ENCODE measurements at regions of chr5 and their contacts with region 1.

Region 1: DNA sequence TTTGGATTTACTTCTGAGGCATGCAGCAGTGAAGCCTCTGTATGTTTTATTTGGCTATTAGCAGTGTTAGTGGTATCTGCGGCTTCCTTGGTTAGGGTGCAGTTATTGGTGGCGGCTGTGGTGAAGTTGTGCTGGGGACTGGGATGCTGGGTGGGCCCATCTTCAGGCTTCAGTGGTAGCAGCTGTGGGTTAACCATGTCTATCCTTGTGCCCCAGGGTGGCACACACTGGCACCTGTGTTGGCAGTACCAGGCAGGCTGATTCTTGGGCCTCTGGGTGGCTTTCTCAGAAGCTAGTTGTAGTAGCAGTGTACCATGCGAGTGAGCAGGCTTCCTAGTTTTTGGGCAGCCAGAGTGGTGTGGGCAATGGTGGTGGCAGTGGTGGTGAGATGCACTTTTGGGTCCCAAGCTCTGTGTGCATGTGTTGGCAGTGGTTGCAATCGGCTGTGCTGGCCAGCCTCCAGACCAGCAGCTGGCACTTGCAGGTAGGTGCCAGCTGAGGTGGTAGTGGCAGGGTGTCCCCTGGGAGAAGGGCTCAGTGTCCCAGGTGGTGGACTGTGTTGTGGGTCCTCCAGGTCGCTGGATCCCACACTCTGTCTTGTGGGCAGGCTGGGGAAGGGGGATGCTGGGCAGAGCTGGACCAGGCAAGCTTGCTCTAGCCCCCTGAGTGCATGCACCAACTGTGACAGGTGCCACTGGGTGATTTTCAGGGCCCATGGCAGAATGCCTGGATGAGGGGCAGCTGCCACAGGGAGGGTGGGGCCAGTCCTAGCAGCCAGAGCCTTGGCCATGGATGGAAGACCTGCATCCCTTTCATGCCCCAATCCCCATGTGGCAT is 13.6 kb downstream of the AHRR start:
- DNase-seq: no peak
- H3K4me3 Mint-ChIP-seq: peak overlapping the region; percentile 65
- H3K27ac Mint-ChIP-seq: peak overlapping the region; percentile 83
- H3K4me1 Mint-ChIP-seq: peaks cover 53% of the 10 kb centered on the region
- H3K27me3 Mint-ChIP-seq: no peaks in the 10 kb centered on the region

Region 2: GRCh38 chr5:217860-218456 is 117.2 kb before region 1 on chr5 and contains the starts of genes CCDC127 and SDHA:
- intact Hi-C with region 1: loop called (anchors 5 kb)
- DNase-seq: peak; percentile 99
- H3K4me3 Mint-ChIP-seq: peak within 1 kb of the TSS; percentile 96
- H3K27ac Mint-ChIP-seq: peak within 1 kb of the TSS; percentile 94
- H3K4me1 Mint-ChIP-seq: peaks cover 61% of the 10 kb centered on the region
- H3K27me3 Mint-ChIP-seq: no peaks in the 10 kb centered on the region
- total RNA-seq, gene CCDC127: 9.5 and 10.9 TPM in 2 replicates
- total RNA-seq, gene SDHA: 135 TPM in 2 replicates

Region 3: GRCh38 chr5:345404-346195 is 10.5 kb after region 1 on chr5:
- intact Hi-C with region 1: loop called (anchors 1 kb)
- DNase-seq: no peak
- H3K4me3 Mint-ChIP-seq: peak overlapping the region; percentile 13
- H3K27ac Mint-ChIP-seq: peak overlapping the region; percentile 23
- H3K4me1 Mint-ChIP-seq: peaks cover 44% of the 10 kb centered on the region
- H3K27me3 Mint-ChIP-seq: no peaks in the 10 kb centered on the region

Region 4: DNA sequence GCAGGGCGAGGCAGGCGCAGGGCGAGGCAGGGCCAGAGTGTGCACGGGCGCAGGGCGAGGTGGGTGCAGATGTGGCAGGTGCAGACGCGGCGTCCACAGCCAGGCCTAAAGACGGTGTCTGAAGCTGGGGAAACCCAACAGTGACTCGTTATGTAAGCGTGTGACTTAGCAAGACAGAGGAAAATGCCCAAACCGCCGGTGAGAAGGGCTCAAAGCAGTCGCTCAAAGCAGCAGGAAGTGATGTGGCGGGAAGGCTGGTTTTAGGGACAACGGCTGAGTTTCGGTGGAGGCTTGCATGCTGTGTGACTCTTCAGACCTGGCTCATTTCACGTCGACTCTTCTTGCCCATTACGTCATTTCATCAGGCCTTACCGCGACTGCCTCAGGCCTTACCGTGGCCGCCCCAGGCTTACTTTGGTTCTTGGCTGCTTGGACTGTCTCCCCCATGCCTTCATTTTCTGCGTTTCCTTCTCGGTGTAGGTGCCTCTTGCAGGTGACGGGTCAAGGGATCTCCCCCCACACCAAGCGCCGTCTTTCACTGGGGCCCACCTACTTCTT is 57.4 kb after region 1 on chr5:
- intact Hi-C with region 1: loop called (anchors 1 kb)
- DNase-seq: peak; percentile 87
- H3K4me3 Mint-ChIP-seq: peak overlapping the region; percentile 74
- H3K27ac Mint-ChIP-seq: peak overlapping the region; percentile 98
- H3K4me1 Mint-ChIP-seq: peaks cover 36% of the 10 kb centered on the region
- H3K27me3 Mint-ChIP-seq: peaks cover 2% of the 10 kb centered on the region

Region 5: GRCh38 chr5:442335-443238 is 107.5 kb after region 1 on chr5 and contains the start of gene EXOC3:
- intact Hi-C with region 1: loop called (anchors 5 kb)
- DNase-seq: peak; percentile 76
- H3K4me3 Mint-ChIP-seq: peak within 1 kb of the TSS; percentile 97
- H3K27ac Mint-ChIP-seq: peak within 1 kb of the TSS; percentile 96
- H3K4me1 Mint-ChIP-seq: peaks cover 19% of the 10 kb centered on the region
- H3K27me3 Mint-ChIP-seq: peaks cover 3% of the 10 kb centered on the region
- total RNA-seq, gene EXOC3: 59.6 and 62.0 TPM in 2 replicates

Region 6: DNA sequence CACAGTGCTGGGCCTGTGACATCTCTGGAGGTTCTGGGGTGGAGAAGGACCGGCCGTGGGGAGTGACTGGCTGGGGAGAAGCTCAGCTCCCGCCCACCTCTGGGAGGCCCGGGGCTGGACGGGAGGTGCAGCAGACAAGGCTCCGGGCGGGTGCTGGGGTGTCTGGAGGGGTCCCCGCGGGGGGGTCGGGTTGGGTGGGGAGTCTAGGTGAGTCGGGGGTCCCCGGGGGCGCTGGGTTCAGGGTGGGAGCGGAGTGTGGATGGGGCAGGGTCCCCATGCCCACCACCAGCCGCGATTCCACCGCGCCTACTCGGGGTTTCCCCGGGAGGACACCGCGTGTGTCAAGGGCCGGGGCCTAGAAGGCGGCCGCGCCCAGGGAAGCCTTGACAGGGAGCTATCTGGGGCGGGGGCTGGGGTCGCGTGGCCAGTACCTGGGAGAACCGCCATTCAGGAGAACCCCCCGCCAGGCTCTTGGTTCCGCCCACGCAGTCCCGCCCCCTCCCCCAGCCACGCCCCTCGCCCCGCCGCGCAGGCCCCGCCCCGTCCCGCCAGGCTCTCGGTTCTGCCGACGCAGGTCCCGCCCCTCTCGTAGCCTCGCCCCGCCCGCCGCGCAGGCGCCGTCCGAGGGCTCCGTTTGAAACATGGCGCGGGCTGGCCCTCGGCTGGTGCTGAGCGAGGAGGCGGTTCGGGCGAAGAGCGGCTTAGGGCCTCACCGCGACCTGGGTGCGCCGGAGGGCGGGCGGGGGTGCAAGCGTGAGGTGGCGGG is 276.8 kb after region 1 on chr5 and contains the start of gene CEP72:
- intact Hi-C with region 1: loop called (anchors 5 kb)
- DNase-seq: peak; percentile 87
- H3K4me3 Mint-ChIP-seq: peak within 1 kb of the TSS; percentile 94
- H3K27ac Mint-ChIP-seq: peak within 1 kb of the TSS; percentile 90
- H3K4me1 Mint-ChIP-seq: peaks cover 54% of the 10 kb centered on the region
- H3K27me3 Mint-ChIP-seq: no peaks in the 10 kb centered on the region
- total RNA-seq, gene CEP72: 32.4 and 35.7 TPM in 2 replicates